Dorsolateral prefrontal cortex (tissue), 120 donors: ENCODE measurements at regions of chr19 and their contacts with region 1.

Region 1: DNA sequence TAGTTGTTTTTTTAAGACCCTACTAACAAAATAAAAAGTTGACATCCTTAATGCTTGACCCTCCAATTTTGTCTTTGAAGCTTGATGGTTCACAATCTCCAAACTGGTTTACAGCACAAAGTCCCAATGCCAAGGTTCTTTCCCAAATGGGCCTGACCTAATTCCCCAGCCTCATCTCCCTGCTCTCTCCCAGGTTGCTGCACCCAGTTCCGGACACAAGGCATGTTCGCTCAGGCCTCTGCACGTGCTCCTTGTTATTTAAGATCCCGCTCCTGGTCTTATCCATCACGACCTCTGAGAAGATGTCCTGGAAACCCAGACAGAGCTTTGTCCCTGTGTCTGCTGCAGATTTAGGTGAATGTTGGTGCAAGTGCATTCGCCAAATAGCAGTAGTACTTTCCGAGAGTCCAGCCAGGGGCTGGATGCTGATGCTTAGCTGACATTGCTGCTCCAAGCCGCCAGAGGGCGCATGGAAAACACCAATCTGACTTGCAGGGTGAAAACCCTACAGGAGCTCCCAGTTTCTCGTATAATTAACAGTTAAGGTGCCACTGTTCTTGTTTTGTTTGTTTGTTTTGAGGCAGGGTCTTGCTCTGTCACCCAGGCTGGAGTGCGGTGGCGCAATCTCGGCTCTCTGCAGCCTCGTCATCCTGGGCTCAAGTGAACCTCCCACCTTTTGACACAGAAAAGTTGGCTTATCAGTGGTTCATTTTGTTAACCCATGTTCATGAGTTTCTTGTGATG is 18.5 kb downstream of the LYPD3 start:
- DNase-seq: peak; percentile 69 to 89 (median 80)
- H3K4me3 ChIP-seq: peak overlapping the region in 1 of 59 donors; percentile 28
- H3K27ac ChIP-seq: no peak overlapping the region
- H3K27me3 ChIP-seq: no peaks in the 10 kb centered on the region
- CTCF ChIP-seq: peak; percentile 91 to 100 (median 99)

Region 2: GRCh38 chr19:43372462-43372861 is 74.5 kb before region 1 on chr19:
- intact Hi-C with region 1: no loop called
- DNase-seq: no peak
- H3K4me3 ChIP-seq: no peak overlapping the region
- H3K27ac ChIP-seq: no peak overlapping the region
- H3K27me3 ChIP-seq: no peaks in the 10 kb centered on the region
- CTCF ChIP-seq: no peak

Region 3: GRCh38 chr19:43503501-43504425 is 56.8 kb after region 1 on chr19:
- intact Hi-C with region 1: loop called (anchors 5 kb)
- DNase-seq: peak; percentile 53 to 96 (median 94)
- H3K4me3 ChIP-seq: peak overlapping the region; percentile 60 to 99 (median 82)
- H3K27ac ChIP-seq: peak overlapping the region in 57 of 59 donors; percentile 14 to 94 (median 79)
- H3K27me3 ChIP-seq: no peaks in the 10 kb centered on the region
- CTCF ChIP-seq: peak in 53 of 56 donors; percentile 25 to 79 (median 51)

Region 4: GRCh38 chr19:43519436-43520088 is 72.6 kb after region 1 on chr19:
- intact Hi-C with region 1: loop called (anchors 1 kb)
- DNase-seq: peak; percentile 69 to 86 (median 79)
- H3K4me3 ChIP-seq: no peak overlapping the region
- H3K27ac ChIP-seq: no peak overlapping the region
- H3K27me3 ChIP-seq: no peaks in the 10 kb centered on the region
- CTCF ChIP-seq: peak; percentile 89 to 99 (median 95)

Region 5: DNA sequence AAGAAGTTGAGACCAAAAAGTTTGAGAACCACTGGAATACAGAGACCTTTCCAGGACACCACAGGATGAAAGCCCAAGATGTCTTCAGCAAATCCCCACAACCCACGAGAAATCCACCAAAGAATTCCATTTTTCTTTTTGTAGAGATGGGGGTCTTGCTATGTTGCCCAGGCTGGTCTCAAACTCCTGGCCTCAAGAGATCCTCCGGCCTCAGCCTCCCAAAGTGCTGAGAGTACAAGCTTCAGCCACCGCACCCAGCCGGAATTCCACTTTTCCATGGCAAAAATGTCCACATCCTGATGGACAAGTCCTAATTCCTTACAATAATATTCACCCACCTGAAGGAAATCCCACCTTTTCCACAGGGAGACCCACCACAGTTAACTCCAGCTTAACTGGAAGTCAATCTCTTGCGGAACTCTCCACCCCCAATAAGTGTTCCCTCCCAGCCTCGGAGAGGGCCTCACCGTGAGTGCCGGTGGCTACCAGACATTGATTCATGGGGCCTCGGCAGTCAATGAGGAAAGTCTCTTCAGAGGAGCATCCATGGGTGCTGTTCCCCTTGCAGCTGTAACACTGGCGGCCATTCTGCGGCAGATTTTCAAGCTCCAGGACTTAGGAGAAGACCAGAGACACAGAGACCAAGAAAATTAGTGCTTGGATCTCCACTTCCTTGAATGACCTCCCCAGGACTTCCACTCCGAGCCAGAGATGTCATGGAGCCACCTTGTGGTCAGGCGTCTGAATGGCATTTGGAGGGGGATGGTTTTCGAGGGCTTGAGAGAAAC is 205.0 kb after region 1 on chr19:
- intact Hi-C with region 1: loop called in 1 of 2 experiments (anchors 10 kb)
- DNase-seq: peak; percentile 54 to 80 (median 70)
- H3K4me3 ChIP-seq: peak overlapping the region in 52 of 59 donors; percentile 2 to 58 (median 34)
- H3K27ac ChIP-seq: peak overlapping the region in 40 of 59 donors; percentile 3 to 77 (median 51)
- H3K27me3 ChIP-seq: no peaks in the 10 kb centered on the region
- CTCF ChIP-seq: peak; percentile 64 to 92 (median 85)

Region 6: GRCh38 chr19:43774103-43774939 is 327.4 kb after region 1 on chr19:
- intact Hi-C with region 1: no loop called
- DNase-seq: peak in 9 of 10 donors; percentile 41 to 79 (median 64)
- H3K4me3 ChIP-seq: peak overlapping the region; percentile 20 to 69 (median 55)
- H3K27ac ChIP-seq: peak overlapping the region in 5 of 59 donors; percentile 7 to 58 (median 45)
- H3K27me3 ChIP-seq: peaks cover 0 to 6% (median 0%) of the 10 kb centered on the region in 45 donors
- CTCF ChIP-seq: peak in 54 of 56 donors; percentile 27 to 74 (median 60)